ENCODE measurements at regions of chr3 and their contacts with region 1.

Region 1: DNA sequence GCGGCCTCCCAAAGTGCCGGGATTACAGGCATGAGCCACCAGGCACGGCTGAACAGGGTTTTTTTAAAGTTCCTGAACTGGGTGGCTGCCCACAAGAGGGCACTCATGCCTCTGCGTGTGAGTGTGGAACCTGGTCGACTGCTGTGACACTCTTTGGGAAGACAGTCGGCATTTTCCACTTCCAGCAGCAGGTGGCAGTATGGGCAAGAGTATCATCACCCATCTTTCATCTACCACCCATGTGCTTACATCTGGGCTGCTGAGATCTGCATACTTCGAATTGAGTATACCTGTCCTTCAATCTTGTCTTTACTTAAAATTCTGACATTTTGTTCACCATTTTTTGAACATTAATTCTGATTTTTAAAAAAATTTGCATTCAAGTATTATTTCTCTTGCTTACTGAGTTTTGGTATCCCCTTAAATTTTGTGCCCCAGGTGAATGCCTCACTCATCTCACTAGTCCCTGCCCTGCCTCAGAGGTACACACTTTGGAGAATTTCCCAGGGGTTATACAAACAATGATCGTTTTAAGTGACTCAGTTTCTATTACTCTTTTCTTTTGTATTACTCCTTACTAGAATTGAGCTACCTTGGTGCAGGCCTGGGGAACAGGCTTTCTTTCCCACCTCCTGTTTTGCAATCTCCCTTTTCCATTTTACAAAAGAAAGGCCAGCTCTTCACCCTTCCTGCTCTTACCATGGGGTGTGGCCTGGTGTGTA is 11.8 kb downstream of the CLEC3B start:
- H3K4me3 ChIP-seq: no peak overlapping the region
- H3K27ac ChIP-seq: no peak overlapping the region
- H3K4me1 ChIP-seq: no peaks in the 10 kb centered on the region
- CTCF ChIP-seq: peak; percentile 89

Region 2: GRCh38 chr3:45507820-45508317 is 470.0 kb after region 1 on chr3:
- CTCF ChIA-PET with region 1: interaction called, 36 read pairs
- POLR2A ChIA-PET with region 1: no interaction called
- H3K4me3 ChIP-seq: no peak overlapping the region
- H3K27ac ChIP-seq: no peak overlapping the region
- H3K4me1 ChIP-seq: peaks cover 3% of the 10 kb centered on the region; the same call in 1 of the 2 replicates
- CTCF ChIP-seq: peak; percentile 37; the same call in 1 of the 2 replicates